ENCODE measurements at regions of chr19 and their contacts with region 1.

Region 1: GRCh38 chr19:4172861-4173473 is 9.4 kb downstream of the SIRT6 start:
- DNase-seq: peak in 1 of 2 experiments; percentile 98
- H3K4me3 ChIP-seq: peak overlapping the region in 3 of 4 experiments; percentile 13 to 32 (median 23); a peak in 5 of 8 replicates
- H3K27ac ChIP-seq: no peak overlapping the region
- H3K4me1 ChIP-seq: peaks cover 0 to 2% (median 0%) of the 10 kb centered on the region in 4 experiments; a peak in 1 of 7 replicates
- H3K27me3 ChIP-seq: peaks cover 0 to 19% (median 6%) of the 10 kb centered on the region in 4 experiments; a peak in 6 of 7 replicates
- CTCF ChIP-seq: no peak
- EP300 ChIP-seq: no peak
- POLR2A ChIP-seq: no peak
- RAD21 ChIP-seq: no peak

Region 2: GRCh38 chr19:4149518-4150288 is 23.3 kb before region 1 on chr19:
- CTCF ChIA-PET with region 1: interaction called, 27 read pairs
- POLR2A ChIA-PET with region 1: interaction called, 3 read pairs
- DNase-seq: no peak
- H3K4me3 ChIP-seq: no peak overlapping the region
- H3K27ac ChIP-seq: no peak overlapping the region
- H3K4me1 ChIP-seq: no peaks in the 10 kb centered on the region; a peak in 1 of 7 replicates
- H3K27me3 ChIP-seq: no peaks in the 10 kb centered on the region; a peak in 1 of 7 replicates
- CTCF ChIP-seq: no peak
- EP300 ChIP-seq: no peak
- POLR2A ChIP-seq: no peak
- RAD21 ChIP-seq: no peak

Region 3: GRCh38 chr19:4157164-4157563 is 15.8 kb before region 1 on chr19:
- CTCF ChIA-PET with region 1: interaction called, 27 read pairs
- POLR2A ChIA-PET with region 1: interaction called, 4 read pairs
- DNase-seq: no peak
- H3K4me3 ChIP-seq: no peak overlapping the region
- H3K27ac ChIP-seq: no peak overlapping the region
- H3K4me1 ChIP-seq: no peaks in the 10 kb centered on the region; a peak in 1 of 7 replicates
- H3K27me3 ChIP-seq: no peaks in the 10 kb centered on the region; a peak in 1 of 7 replicates
- CTCF ChIP-seq: no peak
- EP300 ChIP-seq: no peak
- POLR2A ChIP-seq: no peak
- RAD21 ChIP-seq: no peak

Region 4: DNA sequence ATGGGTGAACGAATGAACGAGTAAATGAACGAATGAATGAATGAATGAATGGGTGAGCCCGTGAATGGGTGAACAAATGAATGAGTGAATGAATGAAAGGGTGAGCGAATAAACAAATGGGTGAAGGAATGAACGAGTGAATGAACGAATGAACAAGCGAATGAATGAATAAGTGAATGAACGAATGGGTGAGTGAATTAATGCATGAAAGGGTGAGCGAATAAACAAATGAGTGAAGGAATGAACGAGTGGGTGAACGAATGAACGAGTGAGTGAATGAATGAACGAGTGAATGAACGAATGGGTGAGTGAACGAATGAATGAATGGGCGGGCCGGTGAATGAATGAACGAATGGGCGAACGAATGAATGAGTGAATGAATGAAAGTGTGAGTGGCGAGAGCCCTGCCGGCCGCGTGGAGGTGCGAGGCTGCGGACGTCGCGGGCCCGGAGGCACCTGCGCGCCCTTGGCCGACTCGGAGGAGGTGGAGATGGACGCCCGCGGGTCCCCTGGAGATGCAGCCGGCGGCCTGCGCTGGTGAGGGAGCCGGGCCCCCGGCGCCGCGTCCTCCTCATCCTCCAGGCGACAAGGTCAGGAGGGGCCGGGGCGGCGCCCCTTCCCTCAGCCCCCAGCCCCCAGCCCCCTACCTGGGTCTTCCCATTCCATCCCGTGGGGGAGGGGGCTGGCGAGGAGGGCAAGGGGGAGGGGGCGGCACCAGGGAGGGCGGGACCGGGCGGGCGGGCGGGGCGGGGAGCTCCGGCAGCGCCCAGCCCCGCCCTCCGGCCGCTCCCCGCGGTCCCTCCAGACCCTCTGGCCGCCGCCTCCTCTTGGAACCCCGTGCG is 24.9 kb after region 1 on chr19:
- CTCF ChIA-PET with region 1: interaction called, 91 read pairs
- POLR2A ChIA-PET with region 1: no interaction called
- DNase-seq: peak in 1 of 2 experiments; percentile 80
- H3K4me3 ChIP-seq: peak overlapping the region; percentile 23 to 87 (median 47); a peak in 7 of 8 replicates
- H3K27ac ChIP-seq: no peak overlapping the region
- H3K4me1 ChIP-seq: peaks cover 0 to 2% (median 0%) of the 10 kb centered on the region in 4 experiments; a peak in 3 of 7 replicates
- H3K27me3 ChIP-seq: peaks cover 0 to 7% (median 3%) of the 10 kb centered on the region in 4 experiments; a peak in 2 of 7 replicates
- CTCF ChIP-seq: no peak
- EP300 ChIP-seq: no peak; a peak in 1 of 3 replicates
- POLR2A ChIP-seq: no peak
- RAD21 ChIP-seq: no peak

Region 5: DNA sequence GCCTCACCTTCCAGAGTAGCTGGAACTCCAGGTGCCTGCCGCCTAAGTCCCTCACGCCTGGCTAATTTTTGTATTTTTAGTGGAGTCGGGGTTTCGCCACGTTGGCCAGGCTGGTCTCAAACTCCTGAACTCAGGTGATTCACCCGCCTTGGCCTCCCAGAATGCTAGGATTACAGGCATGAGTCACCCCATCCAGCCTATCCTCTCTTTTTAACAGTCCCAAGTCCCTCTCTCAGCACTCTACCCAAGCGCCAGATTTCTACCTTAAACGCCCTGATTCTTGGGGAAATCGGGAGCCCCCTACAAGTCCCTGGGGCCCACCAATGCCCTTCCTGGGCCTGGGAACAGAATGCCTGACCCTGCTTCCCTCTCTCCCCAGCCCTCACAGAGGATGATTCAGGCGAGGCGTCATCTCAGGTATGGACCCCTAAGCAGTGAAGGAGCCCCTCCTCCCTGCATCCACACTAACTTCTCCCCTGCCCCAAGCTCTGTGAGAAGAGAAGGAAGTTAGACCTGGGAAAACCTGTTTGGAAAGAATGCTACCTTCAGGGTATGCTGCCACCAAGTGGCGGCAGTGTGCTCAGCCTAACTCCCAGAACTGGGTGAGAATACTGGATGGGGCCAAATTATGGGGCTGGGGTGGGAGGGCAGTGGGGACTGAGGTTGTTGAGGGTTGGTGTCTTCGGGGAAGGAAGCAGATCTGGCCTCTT is 35.6 kb after region 1 on chr19:
- CTCF ChIA-PET with region 1: interaction called, 91 read pairs
- POLR2A ChIA-PET with region 1: no interaction called
- DNase-seq: peak in 1 of 2 experiments; percentile 64
- H3K4me3 ChIP-seq: no peak overlapping the region
- H3K27ac ChIP-seq: no peak overlapping the region
- H3K4me1 ChIP-seq: no peaks in the 10 kb centered on the region; a peak in 1 of 7 replicates
- H3K27me3 ChIP-seq: no peaks in the 10 kb centered on the region
- CTCF ChIP-seq: peak; percentile 52 to 71 (median 54); a peak in 3 of 4 replicates
- EP300 ChIP-seq: no peak
- POLR2A ChIP-seq: no peak
- RAD21 ChIP-seq: peak; percentile 33 to 44

Region 6: DNA sequence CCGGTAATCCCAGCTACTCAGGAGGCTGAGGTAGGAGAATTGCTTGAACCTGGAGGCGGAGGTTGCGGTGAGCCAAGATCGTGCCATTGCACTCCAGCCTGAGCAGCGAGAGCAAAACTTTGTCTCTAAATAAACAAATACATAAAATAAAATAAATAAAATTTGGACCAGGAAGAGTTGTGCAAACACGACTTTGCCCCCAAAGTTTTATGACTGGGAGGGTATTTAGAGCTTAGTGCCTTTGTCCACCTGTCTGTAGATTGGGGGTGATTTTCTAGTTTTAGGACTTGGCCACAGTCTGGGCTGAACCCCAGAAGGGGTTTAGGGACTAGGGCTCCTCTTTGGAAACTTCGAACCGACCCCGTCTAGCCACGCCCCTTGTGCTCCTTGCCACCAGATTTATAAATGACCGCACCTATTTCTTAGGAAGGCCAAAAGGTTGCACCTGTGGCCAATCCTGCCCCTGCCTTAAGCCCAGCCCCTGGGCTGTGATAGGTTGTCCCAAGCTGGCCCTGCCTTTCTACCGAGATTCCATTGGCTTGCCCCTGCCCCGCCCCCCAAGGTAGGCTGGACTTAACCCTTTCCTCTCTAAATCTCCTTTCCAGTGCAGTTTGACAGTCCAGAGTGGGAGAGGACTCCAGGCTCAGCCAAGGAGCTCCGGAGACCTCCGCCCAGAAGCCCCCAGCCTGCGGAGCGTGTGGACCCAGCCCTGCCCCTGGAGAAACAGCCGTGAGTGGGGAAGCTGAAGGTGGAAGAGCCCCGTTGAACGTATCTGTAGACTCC is 111.4 kb after region 1 on chr19:
- CTCF ChIA-PET with region 1: no interaction called
- POLR2A ChIA-PET with region 1: no interaction called
- DNase-seq: peak; percentile 71 to 89
- H3K4me3 ChIP-seq: peak overlapping the region; percentile 7 to 46 (median 16); a peak in 5 of 8 replicates
- H3K27ac ChIP-seq: no peak overlapping the region
- H3K4me1 ChIP-seq: peaks cover 0 to 4% (median 1%) of the 10 kb centered on the region in 4 experiments; a peak in 4 of 7 replicates
- H3K27me3 ChIP-seq: peaks cover 9 to 27% (median 23%) of the 10 kb centered on the region in 4 experiments
- CTCF ChIP-seq: no peak
- EP300 ChIP-seq: no peak
- POLR2A ChIP-seq: no peak
- RAD21 ChIP-seq: no peak